ENCODE measurements at regions of chr22 and their contacts with region 1.

Region 1: GRCh38 chr22:43385770-43386641 is 25.8 kb upstream of the MPPED1 start:
- DNase-seq: peak; percentile 69 to 72
- ATAC-seq: peak; percentile 91 to 95
- H3K4me3 ChIP-seq: no peak overlapping the region
- H3K27ac ChIP-seq: no peak overlapping the region
- H3K4me1 ChIP-seq: no peaks in the 10 kb centered on the region
- CTCF ChIP-seq: peak; percentile 75
- EP300 ChIP-seq: no peak
- POLR2A ChIP-seq: no peak
- RAD21 ChIP-seq: peak; percentile 88 to 89

Region 2: GRCh38 chr22:43220625-43221380 is 165.2 kb before region 1 on chr22:
- CTCF ChIA-PET with region 1: no interaction called
- POLR2A ChIA-PET with region 1: no interaction called
- DNase-seq: no peak
- ATAC-seq: no peak
- H3K4me3 ChIP-seq: no peak overlapping the region
- H3K27ac ChIP-seq: no peak overlapping the region
- H3K4me1 ChIP-seq: no peaks in the 10 kb centered on the region
- CTCF ChIP-seq: no peak
- EP300 ChIP-seq: no peak
- POLR2A ChIP-seq: no peak
- RAD21 ChIP-seq: no peak

Region 3: DNA sequence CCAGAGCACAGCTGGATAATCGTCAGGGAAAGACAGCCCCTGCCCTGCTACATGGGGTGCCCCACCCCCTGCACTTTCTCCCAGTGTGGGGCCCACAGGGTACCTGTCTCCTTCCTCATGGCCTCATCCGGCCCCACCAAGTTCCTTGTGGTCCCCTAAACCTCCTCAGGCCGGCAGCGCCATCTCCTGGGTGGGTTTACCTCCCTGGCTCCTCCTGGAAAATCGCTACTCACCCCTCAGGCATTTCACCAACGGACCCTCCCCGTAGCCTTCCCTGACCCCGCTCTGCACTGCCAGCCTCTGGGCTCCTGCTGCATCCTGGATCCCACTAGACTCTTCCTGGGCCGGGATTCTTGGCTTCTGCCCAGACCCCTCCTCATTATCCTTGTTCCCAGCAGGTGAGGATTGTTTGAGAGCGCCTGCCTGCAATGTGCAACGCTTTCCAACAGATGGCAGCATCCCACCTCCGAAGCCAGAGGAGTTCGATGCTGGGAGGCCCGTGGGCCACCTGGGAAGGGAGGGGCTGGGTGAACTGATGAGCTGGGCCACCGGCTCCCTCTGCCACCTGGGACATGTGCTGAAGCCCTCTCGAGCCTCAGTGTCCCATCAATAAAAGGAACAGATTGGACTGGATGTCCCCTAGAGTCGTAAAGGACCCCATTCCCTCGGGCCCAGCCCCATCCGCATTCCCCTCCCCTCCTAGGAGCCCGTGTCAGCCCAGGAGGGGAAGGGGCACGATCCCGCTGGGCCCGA is 154.9 kb before region 1 on chr22:
- CTCF ChIA-PET with region 1: interaction called, 30 read pairs
- POLR2A ChIA-PET with region 1: no interaction called
- DNase-seq: peak; percentile 45 to 60
- ATAC-seq: peak; percentile 52 to 77; a peak in 3 of 6 replicates
- H3K4me3 ChIP-seq: no peak overlapping the region
- H3K27ac ChIP-seq: no peak overlapping the region
- H3K4me1 ChIP-seq: no peaks in the 10 kb centered on the region
- CTCF ChIP-seq: peak; percentile 69
- EP300 ChIP-seq: no peak
- POLR2A ChIP-seq: no peak
- RAD21 ChIP-seq: peak; percentile 72 to 87

Region 4: DNA sequence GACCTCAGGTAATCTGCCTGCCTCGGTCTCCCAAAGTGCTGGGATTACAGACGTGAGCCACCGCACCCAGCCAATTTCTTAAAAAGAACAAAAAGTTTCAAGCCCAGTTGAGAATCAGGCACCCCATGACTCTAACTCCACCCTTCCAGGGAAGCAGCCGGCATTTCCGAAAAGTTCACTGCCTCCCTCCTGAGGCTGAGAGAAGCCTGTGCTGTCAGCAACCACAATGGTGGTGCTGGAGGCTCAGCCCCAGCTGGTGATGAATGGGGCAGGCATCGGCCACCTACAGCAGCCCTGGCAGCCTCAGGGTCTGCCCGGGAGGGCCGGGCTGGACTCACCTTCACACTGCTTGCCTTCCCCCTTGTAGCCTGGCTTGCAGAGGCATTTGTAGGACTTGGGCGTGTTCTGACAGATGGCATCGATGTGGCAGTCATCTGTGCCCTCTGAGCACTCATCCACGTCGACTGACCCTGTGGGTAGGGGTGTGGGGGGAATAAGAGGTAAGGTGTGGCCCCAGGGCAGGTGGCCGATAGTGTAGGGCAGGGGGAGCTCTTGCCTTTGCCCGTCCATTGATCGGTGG is 47.1 kb before region 1 on chr22:
- CTCF ChIA-PET with region 1: no interaction called
- POLR2A ChIA-PET with region 1: no interaction called
- DNase-seq: no peak
- ATAC-seq: no peak
- H3K4me3 ChIP-seq: no peak overlapping the region
- H3K27ac ChIP-seq: no peak overlapping the region
- H3K4me1 ChIP-seq: peaks cover 4% of the 10 kb centered on the region; the same call in 1 of the 3 replicates
- CTCF ChIP-seq: no peak
- EP300 ChIP-seq: no peak
- POLR2A ChIP-seq: no peak
- RAD21 ChIP-seq: no peak

Region 5: DNA sequence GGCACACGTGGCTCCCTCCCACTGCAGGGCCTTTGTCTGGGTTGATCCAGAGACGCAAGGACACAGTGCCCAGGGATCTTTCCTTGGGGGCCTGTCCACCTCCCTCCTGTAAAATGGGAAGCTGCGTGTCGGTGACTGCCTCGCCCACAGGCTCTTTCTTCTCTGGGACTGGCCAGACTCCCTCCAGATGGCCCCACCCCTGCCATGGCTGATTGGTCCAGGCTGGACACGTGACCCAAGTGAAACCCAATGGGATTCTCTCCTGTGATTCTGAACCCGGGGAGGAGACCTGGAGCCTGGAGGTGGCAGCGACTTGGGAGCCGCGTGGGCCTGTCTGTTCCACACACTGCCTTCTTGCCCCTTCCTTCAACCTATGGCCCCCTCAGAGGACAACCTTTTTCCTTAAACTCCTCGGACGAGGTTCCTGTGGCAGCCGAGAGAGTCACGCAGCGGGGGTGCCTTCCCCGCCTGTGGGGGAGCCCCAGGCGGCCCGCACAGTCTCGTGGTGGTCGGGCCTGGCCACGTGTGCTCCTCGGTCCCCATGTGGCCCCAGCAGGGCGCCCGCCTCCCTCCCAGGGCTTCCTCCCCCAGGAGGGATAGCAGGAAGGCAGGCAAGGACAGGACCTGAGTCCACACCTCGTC is 13.5 kb after region 1 on chr22:
- CTCF ChIA-PET with region 1: interaction called, 16 read pairs
- POLR2A ChIA-PET with region 1: no interaction called
- DNase-seq: no peak
- ATAC-seq: peak in 1 of 2 experiments; percentile 53; a peak in 2 of 6 replicates
- H3K4me3 ChIP-seq: no peak overlapping the region
- H3K27ac ChIP-seq: no peak overlapping the region
- H3K4me1 ChIP-seq: no peaks in the 10 kb centered on the region
- CTCF ChIP-seq: no peak
- EP300 ChIP-seq: no peak
- POLR2A ChIP-seq: no peak
- RAD21 ChIP-seq: no peak

Region 6: GRCh38 chr22:43446916-43447315 is 60.9 kb after region 1 on chr22:
- CTCF ChIA-PET with region 1: no interaction called
- POLR2A ChIA-PET with region 1: no interaction called
- DNase-seq: peak; percentile 9 to 38
- ATAC-seq: peak; percentile 75 to 76; a peak in 5 of 6 replicates
- H3K4me3 ChIP-seq: no peak overlapping the region
- H3K27ac ChIP-seq: no peak overlapping the region
- H3K4me1 ChIP-seq: peaks cover 17% of the 10 kb centered on the region
- CTCF ChIP-seq: no peak
- EP300 ChIP-seq: no peak
- POLR2A ChIP-seq: no peak
- RAD21 ChIP-seq: no peak

Region 7: DNA sequence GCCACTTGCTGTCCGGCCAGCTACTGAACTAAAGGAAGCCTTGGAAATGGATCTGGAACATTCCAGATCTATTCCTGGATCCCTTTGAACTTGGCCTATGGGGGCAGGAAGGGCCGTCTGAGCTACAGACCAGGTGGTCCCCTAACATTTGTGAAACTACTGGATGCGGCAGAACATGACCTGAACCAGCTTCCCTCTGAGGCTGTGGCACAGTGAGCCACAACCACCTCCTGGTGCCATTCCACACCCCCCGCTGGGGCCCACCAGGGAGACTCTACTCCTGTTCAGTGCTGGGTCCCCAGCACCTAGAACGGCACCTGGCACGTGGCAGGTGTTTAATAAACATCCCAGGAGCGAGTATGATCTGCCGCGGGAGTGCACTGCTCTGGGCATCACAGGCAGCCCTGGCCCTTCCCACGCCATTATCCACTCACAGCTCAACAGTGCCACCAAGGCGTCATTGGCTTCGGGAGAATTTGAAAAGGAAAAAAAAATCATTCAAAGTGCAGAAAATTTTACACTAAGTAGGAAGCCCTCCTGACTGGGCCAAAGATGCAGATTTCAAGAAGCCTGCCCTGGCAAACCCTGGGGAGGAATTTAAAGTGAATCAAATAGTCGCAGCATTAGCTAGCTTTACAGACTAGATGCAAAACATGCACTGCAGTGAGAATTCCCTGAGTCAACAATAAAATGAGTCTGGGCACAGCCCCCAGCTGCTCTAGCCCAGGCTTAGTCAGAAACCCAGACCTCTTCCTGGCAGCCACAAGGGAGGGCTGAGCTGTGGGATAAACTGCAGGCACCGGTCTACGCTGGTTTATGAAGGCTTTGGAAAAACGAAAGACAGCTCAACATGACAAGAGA is 440.4 kb after region 1 on chr22:
- CTCF ChIA-PET with region 1: interaction called, 81 read pairs
- POLR2A ChIA-PET with region 1: no interaction called
- DNase-seq: peak; percentile 33 to 46
- ATAC-seq: peak; percentile 72 to 78
- H3K4me3 ChIP-seq: no peak overlapping the region
- H3K27ac ChIP-seq: peak overlapping the region in 1 of 2 experiments; percentile 68; a peak in 3 of 6 replicates
- H3K4me1 ChIP-seq: peaks cover 28% of the 10 kb centered on the region
- CTCF ChIP-seq: peak; percentile 58
- EP300 ChIP-seq: no peak
- POLR2A ChIP-seq: no peak
- RAD21 ChIP-seq: peak; percentile 76 to 77

Region 8: GRCh38 chr22:43833286-43834240 is 447.6 kb after region 1 on chr22:
- CTCF ChIA-PET with region 1: interaction called, 81 read pairs
- POLR2A ChIA-PET with region 1: no interaction called
- DNase-seq: no peak
- ATAC-seq: no peak
- H3K4me3 ChIP-seq: no peak overlapping the region
- H3K27ac ChIP-seq: no peak overlapping the region
- H3K4me1 ChIP-seq: no peaks in the 10 kb centered on the region
- CTCF ChIP-seq: no peak
- EP300 ChIP-seq: no peak
- POLR2A ChIP-seq: no peak
- RAD21 ChIP-seq: no peak